Aorta (tissue), 5 donors: ENCODE measurements at regions of chr5 and their contacts with region 1.

Region 1: DNA sequence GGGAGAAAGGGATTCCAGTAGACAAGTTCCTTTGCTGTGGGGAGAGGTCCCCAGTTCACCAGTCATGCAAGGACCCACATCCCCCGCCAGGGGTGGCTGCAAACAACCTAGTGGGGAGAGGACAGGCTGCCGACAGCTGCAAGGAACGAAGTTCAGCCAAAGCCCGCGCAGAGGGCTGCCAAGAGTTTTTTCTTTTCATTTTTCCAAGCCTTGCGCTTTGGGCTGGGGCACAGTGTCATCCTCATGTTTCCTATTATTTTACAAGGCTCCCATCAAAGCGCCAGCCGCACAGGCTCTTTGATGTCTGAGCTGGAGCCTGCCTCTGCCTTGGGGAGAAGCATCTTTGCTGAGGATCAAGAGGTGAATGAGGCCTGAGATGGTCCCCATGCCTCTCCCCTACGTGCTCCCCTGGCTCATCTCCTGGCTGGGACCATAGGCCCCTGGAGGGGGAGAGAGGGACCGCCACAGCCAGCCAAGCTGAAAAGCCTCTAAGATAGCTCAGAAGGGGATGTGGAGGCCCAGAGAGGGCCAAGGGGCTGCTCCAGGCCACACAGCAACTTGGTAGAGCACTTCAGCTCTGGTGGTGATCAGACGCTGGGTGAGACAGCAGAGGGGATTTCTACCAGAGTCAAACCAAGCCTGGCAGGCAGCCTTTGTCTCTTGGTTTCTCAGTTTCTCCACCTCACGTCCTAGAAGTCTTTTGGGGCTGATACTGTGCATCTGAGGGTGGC is 50.4 kb upstream of the SYNPO start:
- DNase-seq: peak; percentile 80 to 87
- ATAC-seq: peak; percentile 87
- H3K4me3 ChIP-seq: no peak overlapping the region
- H3K27ac ChIP-seq: peak overlapping the region; percentile 6 to 84
- H3K4me1 ChIP-seq: peaks cover 3 to 6% of the 10 kb centered on the region in 2 donors
- H3K27me3 ChIP-seq: no peaks in the 10 kb centered on the region

Region 2: DNA sequence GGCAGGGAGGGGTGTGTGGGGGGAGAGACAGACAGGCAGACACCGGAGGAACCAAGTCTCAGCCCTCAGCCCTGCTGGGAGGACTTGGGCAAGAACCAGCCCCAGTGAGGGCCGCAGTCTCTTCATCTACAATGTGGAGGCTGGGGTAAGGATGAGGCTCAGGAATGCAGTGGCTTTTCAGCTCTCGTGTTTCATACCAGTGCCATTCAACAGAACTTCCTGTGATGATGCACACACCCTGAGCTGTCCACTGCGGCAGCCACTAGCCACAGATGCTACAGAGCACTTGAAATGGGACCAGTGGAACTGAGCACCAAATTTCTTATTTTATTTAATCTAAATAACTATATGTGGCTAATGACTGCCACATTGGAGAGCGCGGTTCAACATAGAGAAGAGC is 311.1 kb before region 1 on chr5:
- intact Hi-C with region 1: no loop called
- DNase-seq: no peak
- ATAC-seq: no peak
- H3K4me3 ChIP-seq: no peak overlapping the region
- H3K27ac ChIP-seq: no peak overlapping the region
- H3K4me1 ChIP-seq: no peaks in the 10 kb centered on the region
- H3K27me3 ChIP-seq: no peaks in the 10 kb centered on the region

Region 3: GRCh38 chr5:150567021-150567717 is 22.9 kb before region 1 on chr5:
- intact Hi-C with region 1: no loop called
- DNase-seq: peak in 1 of 2 donors; percentile 21
- ATAC-seq: peak; percentile 60
- H3K4me3 ChIP-seq: no peak overlapping the region
- H3K27ac ChIP-seq: no peak overlapping the region
- H3K4me1 ChIP-seq: no peaks in the 10 kb centered on the region
- H3K27me3 ChIP-seq: no peaks in the 10 kb centered on the region

Region 4: DNA sequence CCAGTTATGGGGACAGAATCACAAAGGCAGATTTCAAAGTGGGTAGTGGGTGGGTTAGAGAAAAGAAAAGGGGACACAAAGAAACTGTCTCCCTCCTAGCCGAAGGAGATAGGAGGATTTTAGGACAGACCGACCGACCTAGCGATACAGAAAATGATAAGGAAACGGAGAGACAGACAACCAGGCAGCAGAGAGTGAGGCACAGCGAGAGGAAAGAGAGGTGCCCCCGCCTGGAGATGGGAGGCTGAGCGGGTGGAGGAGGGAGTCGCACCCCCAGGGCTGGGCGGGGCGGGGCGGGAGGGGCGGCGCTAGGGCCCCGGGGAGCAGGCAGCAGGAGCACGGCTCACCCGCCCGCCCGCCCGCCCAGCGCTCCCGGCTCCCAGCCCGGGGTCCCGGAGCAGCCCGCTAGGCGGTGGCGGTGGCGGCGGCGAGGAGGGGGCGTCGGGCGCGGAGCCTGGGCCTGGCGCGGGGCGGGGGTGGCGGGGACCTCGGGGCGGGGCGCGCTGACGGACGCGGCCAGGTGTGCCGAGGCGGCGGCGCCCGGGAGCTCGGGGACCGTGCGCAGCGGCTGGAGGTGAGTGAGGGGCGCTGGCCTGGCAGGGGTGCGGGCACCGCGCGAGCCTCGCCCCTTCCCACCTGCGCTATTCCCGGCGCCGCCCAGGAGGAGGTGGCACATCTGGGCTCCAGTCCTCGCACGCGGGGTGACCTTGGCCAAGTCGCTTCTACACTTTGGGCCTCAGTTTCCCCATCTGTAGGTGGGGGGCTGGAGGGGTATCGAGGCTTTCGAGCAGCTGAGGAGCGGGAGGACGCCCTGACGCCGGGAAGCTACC is 34.5 kb after region 1 on chr5:
- intact Hi-C with region 1: loop called (anchors 2 to 5 kb)
- DNase-seq: no peak
- ATAC-seq: peak; percentile 9
- H3K4me3 ChIP-seq: peak overlapping the region; percentile 83 to 90
- H3K27ac ChIP-seq: peak overlapping the region; percentile 80 to 99
- H3K4me1 ChIP-seq: no peaks in the 10 kb centered on the region
- H3K27me3 ChIP-seq: no peaks in the 10 kb centered on the region

Region 5: DNA sequence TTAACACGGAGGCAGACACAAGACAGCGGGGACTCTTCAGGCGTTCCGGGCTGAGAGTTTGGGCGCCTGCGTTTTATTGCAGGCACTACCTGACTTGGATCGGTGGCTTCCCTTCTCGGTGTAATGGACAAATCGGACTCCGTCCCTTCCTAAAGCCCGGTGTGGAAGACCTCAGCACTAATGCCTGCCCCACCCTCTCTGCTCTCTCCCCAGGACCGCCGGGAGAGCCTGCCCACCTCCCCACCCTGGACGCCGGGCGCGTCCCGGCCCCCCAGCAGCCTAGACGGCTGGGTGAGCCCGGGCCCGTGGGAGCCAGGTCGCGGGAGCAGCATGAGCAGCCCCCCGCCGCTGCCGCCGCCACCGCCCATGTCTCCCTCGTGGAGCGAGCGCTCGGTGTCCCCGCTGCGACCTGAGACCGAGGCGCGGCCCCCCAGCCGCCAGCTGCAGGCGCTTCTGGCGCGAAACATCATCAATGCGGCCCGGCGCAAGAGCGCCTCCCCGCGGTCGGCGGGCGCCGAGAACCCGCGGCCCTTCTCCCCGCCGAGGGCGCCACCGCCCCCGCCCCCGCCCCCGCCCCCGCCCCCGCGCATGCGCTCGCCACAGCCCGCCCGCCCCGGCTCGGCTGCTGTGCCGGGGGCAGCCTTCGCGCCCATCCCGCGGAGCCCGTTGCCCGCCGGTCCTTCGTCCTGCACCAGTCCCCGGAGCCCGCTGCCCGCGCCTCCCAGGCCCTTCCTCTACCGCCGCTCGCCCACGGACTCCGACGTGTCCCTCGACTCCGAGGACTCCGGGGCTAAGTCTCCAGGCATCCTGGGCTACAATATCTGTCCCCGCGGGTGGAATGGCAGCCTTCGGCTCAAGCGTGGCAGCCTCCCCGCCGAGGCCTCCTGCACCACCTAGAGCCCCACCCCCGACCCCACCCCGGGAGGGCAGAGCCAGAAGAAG is 66.4 kb after region 1 on chr5:
- intact Hi-C with region 1: loop called (anchors 2 to 5 kb)
- DNase-seq: peak; percentile 81 to 93
- ATAC-seq: peak; percentile 60
- H3K4me3 ChIP-seq: no peak overlapping the region
- H3K27ac ChIP-seq: peak overlapping the region; percentile 18 to 82
- H3K4me1 ChIP-seq: no peaks in the 10 kb centered on the region
- H3K27me3 ChIP-seq: no peaks in the 10 kb centered on the region